Head of caudate nucleus (tissue), 42 donors: ENCODE measurements at regions of chr1 and their contacts with region 1.

Region 1: GRCh38 chr1:75632350-75632949 is 21.5 kb upstream of the SLC44A5 start:
- DNase-seq: peak in 15 of 42 donors; percentile 9 to 66 (median 28)

Region 2: GRCh38 chr1:75245239-75245638 is 387.2 kb before region 1 on chr1:
- intact Hi-C with region 1: loop called (anchors 10 kb)
- DNase-seq: no peak

Region 3: GRCh38 chr1:75423616-75424015 is 208.8 kb before region 1 on chr1:
- intact Hi-C with region 1: no loop called
- DNase-seq: no peak

Region 4: DNA sequence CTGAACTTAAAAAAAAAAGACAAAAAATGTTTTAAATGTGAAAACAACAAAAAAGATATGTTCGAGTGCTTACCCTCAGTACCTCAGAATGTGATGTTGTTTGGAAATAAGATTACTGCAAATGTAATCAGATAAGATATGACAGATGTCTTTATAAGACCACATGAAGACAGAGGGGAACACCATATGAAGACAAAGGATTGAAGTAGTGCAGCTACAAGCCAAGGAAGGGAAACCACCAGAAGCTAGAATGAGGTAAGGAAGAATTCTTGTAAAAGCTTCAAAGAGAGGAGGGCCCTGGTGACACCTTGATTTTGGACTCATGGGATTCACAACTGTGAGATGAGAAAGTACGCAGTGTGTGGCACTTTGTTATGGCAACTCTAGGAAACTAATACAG is 284.4 kb after region 1 on chr1:
- intact Hi-C with region 1: no loop called
- DNase-seq: no peak

Region 5: DNA sequence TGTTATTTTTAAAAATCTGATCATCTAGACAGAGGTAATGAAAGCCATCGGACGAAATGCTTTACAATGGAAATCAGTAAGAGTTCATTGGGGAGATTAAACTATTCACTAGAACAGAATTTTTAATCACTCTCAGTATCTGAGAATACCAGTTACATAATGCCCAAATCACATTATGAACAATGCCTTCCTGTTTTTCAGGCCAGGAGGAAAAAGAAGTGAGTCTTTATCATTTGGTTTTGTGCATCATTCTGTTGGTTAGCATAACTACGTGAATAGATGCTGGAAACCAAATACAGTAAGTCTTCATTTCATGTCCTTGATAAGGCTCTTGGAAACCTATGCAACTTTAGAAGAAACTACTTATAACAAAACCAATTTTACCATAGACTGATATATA is 317.7 kb after region 1 on chr1:
- intact Hi-C with region 1: no loop called
- DNase-seq: no peak